K562 (cell line): ENCODE measurements at regions of chr3 and their contacts with region 1.

Region 1: DNA sequence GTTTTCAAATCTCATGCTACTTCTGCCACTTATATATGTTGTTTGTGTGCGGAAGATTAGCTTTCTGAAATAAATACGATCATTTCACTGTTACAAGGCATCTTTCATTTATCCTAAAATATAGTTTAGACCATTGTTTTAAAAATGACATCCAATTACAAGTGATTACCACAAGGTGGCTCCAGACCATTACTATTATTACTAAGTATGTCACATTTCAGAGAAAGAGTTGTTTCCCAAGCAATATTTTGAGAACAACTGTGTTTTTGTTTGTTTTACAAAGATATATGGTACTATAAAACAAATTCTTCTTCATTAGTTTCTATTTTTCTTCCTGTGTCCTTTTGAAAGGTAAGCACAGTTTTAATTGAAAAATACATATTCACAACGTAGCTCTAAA is 136.0 kb upstream of the RAP2B start:
- DNase-seq: peak in 3 of 4 experiments; percentile 21 to 62 (median 36)
- ATAC-seq: no peak
- H3K4me3 ChIP-seq: no peak overlapping the region
- H3K27ac ChIP-seq: no peak overlapping the region
- H3K4me1 ChIP-seq: peaks cover 15 to 32% of the 10 kb centered on the region in 2 experiments; a peak in 4 of 5 replicates
- H3K27me3 ChIP-seq: no peaks in the 10 kb centered on the region
- CTCF ChIP-seq: peak in 2 of 3 experiments; percentile 43 to 76; a peak in 3 of 6 replicates
- EP300 ChIP-seq: no peak
- POLR2A ChIP-seq: no peak
- RAD21 ChIP-seq: peak; percentile 86 to 91

Region 2: DNA sequence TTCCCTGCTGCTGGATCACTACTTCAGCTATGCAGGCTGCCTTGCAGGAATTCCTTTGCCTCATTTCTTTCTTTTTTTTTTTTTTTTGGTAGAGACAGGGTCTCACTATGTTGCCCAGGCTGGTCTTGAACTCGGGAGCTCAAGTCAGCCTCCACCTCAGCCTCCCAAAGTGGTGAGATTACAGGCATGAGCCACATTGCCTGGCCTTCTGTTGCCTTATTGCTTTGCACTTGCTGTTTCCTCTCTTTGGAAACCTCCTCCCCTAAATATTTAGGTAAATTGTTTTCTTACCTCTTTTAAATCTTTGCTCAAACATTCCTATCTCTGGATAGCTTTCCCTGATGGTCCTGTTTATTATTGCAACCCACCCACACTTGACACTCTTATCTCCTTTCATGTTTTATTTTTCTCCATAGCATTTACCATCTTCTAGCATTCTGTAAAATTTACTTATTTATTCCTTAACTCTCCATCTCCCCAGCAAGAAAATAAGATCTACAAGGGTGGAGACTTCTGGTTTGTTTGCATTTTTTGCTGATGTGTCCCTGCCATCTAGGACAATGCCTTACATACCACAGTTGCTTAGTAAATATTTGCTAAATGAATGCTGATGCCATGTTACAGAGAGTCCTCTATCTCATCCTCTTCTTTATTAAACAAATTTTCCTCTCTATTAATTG is 56.3 kb before region 1 on chr3:
- CTCF ChIA-PET with region 1: no interaction called
- POLR2A ChIA-PET with region 1: no interaction called
- in situ Hi-C with region 1: no loop called
- intact Hi-C with region 1: loop called (anchors 5 kb)
- DNase-seq: no peak
- ATAC-seq: no peak
- H3K4me3 ChIP-seq: no peak overlapping the region
- H3K27ac ChIP-seq: no peak overlapping the region
- H3K4me1 ChIP-seq: peaks cover 2 to 26% of the 10 kb centered on the region in 2 experiments; a peak in 3 of 5 replicates
- H3K27me3 ChIP-seq: no peaks in the 10 kb centered on the region
- CTCF ChIP-seq: no peak
- EP300 ChIP-seq: no peak
- POLR2A ChIP-seq: no peak
- RAD21 ChIP-seq: no peak

Region 3: GRCh38 chr3:153291056-153291685 is 265.1 kb after region 1 on chr3:
- CTCF ChIA-PET with region 1: interaction called, 6 read pairs
- POLR2A ChIA-PET with region 1: no interaction called
- in situ Hi-C with region 1: loop called (anchors 25 kb)
- intact Hi-C with region 1: loop called (anchors 1 kb)
- DNase-seq: peak; percentile 17 to 67 (median 31)
- ATAC-seq: peak; percentile 84
- H3K4me3 ChIP-seq: no peak overlapping the region
- H3K27ac ChIP-seq: no peak overlapping the region
- H3K4me1 ChIP-seq: peaks cover 0 to 21% of the 10 kb centered on the region in 2 experiments; a peak in 2 of 5 replicates
- H3K27me3 ChIP-seq: no peaks in the 10 kb centered on the region
- CTCF ChIP-seq: peak; percentile 56 to 66 (median 56)
- EP300 ChIP-seq: no peak
- POLR2A ChIP-seq: no peak
- RAD21 ChIP-seq: peak; percentile 36 to 67; a peak in 3 of 4 replicates

Region 4: DNA sequence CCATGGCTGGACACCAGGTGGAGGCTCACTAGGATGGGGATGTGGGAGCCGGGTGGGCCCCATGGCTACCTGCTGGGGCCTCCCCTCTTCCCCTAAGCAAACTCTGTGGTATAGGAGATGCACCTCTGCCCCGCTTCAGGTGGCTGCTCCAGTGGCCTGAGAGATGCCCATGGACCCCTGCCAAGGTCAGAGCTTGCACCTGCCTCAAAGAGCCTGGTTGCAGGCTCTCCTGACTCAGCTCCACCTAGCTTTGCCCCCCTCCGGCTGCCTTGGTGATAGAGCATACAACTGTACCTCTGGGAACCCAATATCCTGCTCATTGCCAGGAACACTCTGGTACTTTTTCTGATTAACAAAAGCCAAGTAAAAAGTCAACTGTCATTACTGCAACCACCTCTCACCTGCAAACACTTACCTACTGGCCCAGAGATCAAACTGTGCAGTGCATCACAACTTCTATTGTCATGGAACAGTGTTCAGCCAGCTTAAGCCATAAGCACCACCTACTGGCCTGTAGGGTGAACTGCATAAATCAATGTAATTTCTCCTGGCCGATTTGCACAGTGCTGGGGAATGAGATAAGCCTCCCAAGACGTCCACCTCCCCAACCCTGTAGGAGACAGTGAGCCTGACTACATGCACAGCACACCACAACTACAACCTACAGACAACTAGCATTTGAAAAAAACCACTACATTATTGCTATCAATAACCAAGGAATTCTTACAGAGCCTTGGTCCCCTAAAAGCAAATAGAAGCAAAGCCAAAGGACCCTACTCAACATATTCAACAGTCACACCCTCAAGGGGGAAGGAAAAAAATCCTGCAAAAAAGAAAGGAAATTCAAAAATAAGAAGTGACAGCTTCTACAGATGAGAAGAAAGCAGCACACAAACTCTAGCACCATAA is 742.8 kb after region 1 on chr3:
- CTCF ChIA-PET with region 1: no interaction called
- POLR2A ChIA-PET with region 1: no interaction called
- in situ Hi-C with region 1: loop called (anchors 5 kb)
- intact Hi-C with region 1: loop called (anchors 5 kb)
- DNase-seq: peak; percentile 21 to 55 (median 34)
- ATAC-seq: peak; percentile 92
- H3K4me3 ChIP-seq: no peak overlapping the region
- H3K27ac ChIP-seq: no peak overlapping the region
- H3K4me1 ChIP-seq: no peaks in the 10 kb centered on the region
- H3K27me3 ChIP-seq: no peaks in the 10 kb centered on the region
- CTCF ChIP-seq: peak; percentile 51 to 65 (median 62)
- EP300 ChIP-seq: no peak
- POLR2A ChIP-seq: no peak
- RAD21 ChIP-seq: peak; percentile 57 to 72

Region 5: GRCh38 chr3:154018100-154018696 is 992.2 kb after region 1 on chr3:
- CTCF ChIA-PET with region 1: no interaction called
- POLR2A ChIA-PET with region 1: no interaction called
- in situ Hi-C with region 1: loop called (anchors 25 kb)
- intact Hi-C with region 1: no loop called
- DNase-seq: peak; percentile 25 to 53 (median 35)
- ATAC-seq: peak; percentile 80
- H3K4me3 ChIP-seq: no peak overlapping the region
- H3K27ac ChIP-seq: no peak overlapping the region
- H3K4me1 ChIP-seq: no peaks in the 10 kb centered on the region
- H3K27me3 ChIP-seq: no peaks in the 10 kb centered on the region; a peak in 1 of 5 replicates
- CTCF ChIP-seq: peak; percentile 39 to 66 (median 46); a peak in 4 of 6 replicates
- EP300 ChIP-seq: no peak
- POLR2A ChIP-seq: no peak
- RAD21 ChIP-seq: peak; percentile 8 to 47; a peak in 2 of 4 replicates